ENCODE measurements at regions of chr2 and their contacts with region 1.

Region 1: DNA sequence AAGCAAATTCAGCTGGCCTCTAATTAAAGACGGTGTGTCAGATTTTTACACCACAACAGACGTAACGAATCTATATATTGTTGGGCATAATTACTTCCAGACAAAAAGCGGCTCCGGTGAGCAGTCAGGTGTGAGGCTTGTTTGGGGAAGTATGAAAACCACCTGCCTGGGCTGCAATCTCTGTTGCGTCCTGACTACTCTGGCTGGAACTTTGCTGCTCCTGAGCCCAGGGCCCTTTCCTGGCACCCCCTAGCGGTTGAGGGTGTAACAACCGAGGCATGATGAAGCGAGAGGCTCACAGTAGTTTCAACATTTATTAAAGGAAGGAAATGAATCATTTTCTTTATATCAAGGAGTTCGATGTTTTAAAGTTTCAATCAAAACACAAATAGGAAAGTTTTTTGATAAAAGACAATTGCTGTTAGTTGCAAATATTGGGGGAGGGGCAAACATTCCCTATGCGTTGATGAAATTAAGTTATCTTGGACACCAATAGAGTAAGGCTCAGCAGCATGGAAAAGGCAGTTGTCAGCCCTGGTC is 10.6 kb upstream of the ITGB6 start:
- DNase-seq: peak; percentile 75
- ATAC-seq: peak; percentile 90
- H3K4me3 ChIP-seq: no peak overlapping the region
- H3K27ac ChIP-seq: no peak overlapping the region
- H3K4me1 ChIP-seq: peaks cover 31% of the 10 kb centered on the region
- H3K27me3 ChIP-seq: peaks cover 0 to 2% of the 10 kb centered on the region in 2 experiments; a peak in 3 of 4 replicates
- CTCF ChIP-seq: peak; percentile 89 to 96 (median 95)
- EP300 ChIP-seq: peak in 1 of 2 experiments; percentile 86; a peak in 2 of 4 replicates
- POLR2A ChIP-seq: no peak
- RAD21 ChIP-seq: peak; percentile 86

Region 2: DNA sequence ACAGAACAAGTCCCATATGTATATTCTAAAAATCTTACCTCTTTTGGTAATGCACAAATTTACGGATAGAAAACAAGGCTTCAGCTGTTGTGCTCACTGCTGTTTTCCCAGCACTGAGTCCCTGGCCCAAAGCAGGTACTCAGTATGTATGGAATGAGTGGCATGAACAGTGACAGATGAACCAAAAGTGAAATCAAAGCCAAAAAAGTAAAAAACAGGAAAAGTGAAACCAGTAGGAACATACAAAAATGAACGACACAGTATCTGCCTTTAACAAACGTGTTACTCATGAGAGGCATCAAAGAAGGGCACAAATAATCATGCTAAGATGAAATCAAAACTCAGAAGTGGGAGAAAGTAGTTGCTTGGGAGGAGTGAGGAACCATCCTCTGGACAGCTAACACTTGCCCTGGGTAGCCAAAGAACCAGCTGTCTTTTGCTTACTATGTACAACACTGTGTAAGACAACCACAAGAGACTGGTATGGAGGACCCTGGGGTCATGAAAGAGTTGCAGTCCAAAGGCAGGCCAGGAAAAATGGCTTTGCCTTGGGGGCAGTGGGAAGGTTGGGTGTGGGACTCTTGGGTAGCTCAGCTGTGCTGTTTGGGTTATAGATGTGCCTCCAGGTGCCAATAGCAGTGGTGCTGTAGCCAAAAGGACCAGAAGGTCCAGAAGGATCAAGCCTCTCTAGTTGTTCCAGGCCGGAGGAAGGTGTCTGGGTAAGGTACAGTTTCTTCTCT is 108.5 kb before region 1 on chr2:
- CTCF ChIA-PET with region 1: interaction called, 122 read pairs
- POLR2A ChIA-PET with region 1: no interaction called
- RAD21 ChIA-PET with region 1: interaction called, 4 read pairs
- SMC1A ChIA-PET with region 1: interaction called, 7 read pairs
- in situ Hi-C with region 1: loop called (anchors 5 kb)
- intact Hi-C with region 1: no loop called
- DNase-seq: no peak
- ATAC-seq: no peak
- H3K4me3 ChIP-seq: no peak overlapping the region
- H3K27ac ChIP-seq: no peak overlapping the region
- H3K4me1 ChIP-seq: no peaks in the 10 kb centered on the region; the same call in 1 of the 2 replicates
- H3K27me3 ChIP-seq: peaks cover 2 to 5% of the 10 kb centered on the region in 2 experiments; a peak in 2 of 4 replicates
- CTCF ChIP-seq: no peak
- EP300 ChIP-seq: no peak
- POLR2A ChIP-seq: no peak
- RAD21 ChIP-seq: no peak

Region 3: GRCh38 chr2:160166002-160166401 is 44.7 kb before region 1 on chr2:
- CTCF ChIA-PET with region 1: interaction called, 3 read pairs
- POLR2A ChIA-PET with region 1: interaction called, 3 read pairs
- RAD21 ChIA-PET with region 1: no interaction called
- SMC1A ChIA-PET with region 1: interaction called, 4 read pairs
- in situ Hi-C with region 1: no loop called
- intact Hi-C with region 1: loop called (anchors 5 kb)
- DNase-seq: no peak
- ATAC-seq: no peak
- H3K4me3 ChIP-seq: no peak overlapping the region
- H3K27ac ChIP-seq: no peak overlapping the region
- H3K4me1 ChIP-seq: no peaks in the 10 kb centered on the region
- H3K27me3 ChIP-seq: no peaks in the 10 kb centered on the region
- CTCF ChIP-seq: no peak
- EP300 ChIP-seq: no peak
- POLR2A ChIP-seq: no peak
- RAD21 ChIP-seq: no peak

Region 4: GRCh38 chr2:160269803-160270570 is 59.3 kb after region 1 on chr2:
- CTCF ChIA-PET with region 1: interaction called, 6 read pairs
- POLR2A ChIA-PET with region 1: no interaction called
- RAD21 ChIA-PET with region 1: interaction called, 3 read pairs
- SMC1A ChIA-PET with region 1: interaction called, 6 read pairs
- in situ Hi-C with region 1: no loop called
- intact Hi-C with region 1: loop called (anchors 1 kb)
- DNase-seq: peak; percentile 11
- ATAC-seq: peak; percentile 81
- H3K4me3 ChIP-seq: peak overlapping the region; percentile 40; the same call in 1 of the 2 replicates
- H3K27ac ChIP-seq: no peak overlapping the region
- H3K4me1 ChIP-seq: peaks cover 3% of the 10 kb centered on the region
- H3K27me3 ChIP-seq: peaks cover 2 to 5% of the 10 kb centered on the region in 2 experiments; a peak in 2 of 4 replicates
- CTCF ChIP-seq: peak; percentile 55 to 70 (median 56)
- EP300 ChIP-seq: no peak
- POLR2A ChIP-seq: no peak
- RAD21 ChIP-seq: 0 out of 2 replicates have a peak, but pooled peaks have one; percentile 11